Psoas muscle (tissue), 8 donors: ENCODE measurements at regions of chr3 and their contacts with region 1.

Region 1: DNA sequence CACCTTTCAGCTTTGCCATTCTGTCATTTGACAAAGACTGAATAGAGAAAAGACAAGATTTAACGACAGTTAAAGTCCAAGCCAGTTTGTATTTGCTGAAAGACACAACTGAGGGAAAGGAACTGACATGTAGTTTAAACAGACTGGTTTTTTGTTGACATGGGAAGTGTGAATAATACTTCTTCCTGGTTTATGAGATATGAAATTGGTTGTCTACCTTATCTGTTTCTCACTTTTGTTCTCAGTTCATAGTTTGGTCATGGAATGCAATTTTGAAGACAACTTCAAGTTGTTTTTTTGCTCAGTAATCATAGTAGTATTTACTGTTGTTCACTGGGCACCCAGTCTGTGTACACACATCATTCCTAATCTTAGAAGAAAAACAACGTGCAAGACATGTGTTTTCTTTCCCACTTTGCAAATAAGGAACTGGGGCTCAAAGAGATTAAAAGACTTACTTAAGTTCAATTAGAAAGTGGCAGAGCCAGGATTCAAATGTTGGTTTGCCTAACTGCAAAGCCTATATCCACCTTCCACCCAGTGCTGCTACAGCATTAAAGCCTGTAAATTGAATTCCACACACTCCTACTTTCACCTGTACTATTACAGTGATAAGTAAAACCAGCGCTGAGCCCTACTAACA is 103.5 kb downstream of the LPP start:
- DNase-seq: no peak
- ATAC-seq: no peak
- H3K4me3 ChIP-seq: no peak overlapping the region
- H3K27ac ChIP-seq: peak overlapping the region; percentile 98
- H3K4me1 ChIP-seq: peaks cover 46% of the 10 kb centered on the region
- H3K27me3 ChIP-seq: no peaks in the 10 kb centered on the region
- CTCF ChIP-seq: no peak

Region 2: GRCh38 chr3:188220988-188221818 is 36.3 kb before region 1 on chr3:
- intact Hi-C with region 1: no loop called
- DNase-seq: peak; percentile 80 to 92
- ATAC-seq: peak; percentile 94 to 98 (median 96)
- H3K4me3 ChIP-seq: no peak overlapping the region
- H3K27ac ChIP-seq: peak overlapping the region; percentile 87
- H3K4me1 ChIP-seq: peaks cover 63% of the 10 kb centered on the region
- H3K27me3 ChIP-seq: no peaks in the 10 kb centered on the region
- CTCF ChIP-seq: no peak

Region 3: DNA sequence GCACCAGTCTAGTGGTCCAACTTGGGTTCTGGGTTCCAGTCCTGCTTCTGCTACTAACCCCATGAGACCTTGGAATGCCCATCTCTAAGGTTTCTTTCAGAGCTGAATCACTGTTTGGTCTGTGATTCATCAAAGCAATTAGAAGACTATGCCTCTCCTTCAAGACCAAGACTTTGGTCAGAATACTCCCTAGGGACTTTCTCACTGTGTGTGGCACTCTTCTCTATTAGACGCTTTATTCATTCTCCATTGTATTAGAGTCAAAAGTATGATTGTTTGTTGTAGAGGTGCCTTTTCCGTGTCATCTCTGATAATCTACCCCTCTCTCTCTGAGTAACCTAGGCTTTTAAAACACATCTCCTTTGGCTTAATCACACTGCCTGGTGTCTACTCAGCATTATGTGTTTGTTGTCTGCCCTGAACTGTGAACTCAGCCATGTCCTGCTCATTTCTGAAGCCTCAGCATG is 13.1 kb before region 1 on chr3:
- intact Hi-C with region 1: loop called in 1 of 2 experiments (anchors 1 kb)
- DNase-seq: no peak
- ATAC-seq: no peak
- H3K4me3 ChIP-seq: no peak overlapping the region
- H3K27ac ChIP-seq: no peak overlapping the region
- H3K4me1 ChIP-seq: peaks cover 56% of the 10 kb centered on the region
- H3K27me3 ChIP-seq: no peaks in the 10 kb centered on the region
- CTCF ChIP-seq: no peak